H1 (cell line): ENCODE measurements at regions of chr14 and their contacts with region 1.

Region 1: DNA sequence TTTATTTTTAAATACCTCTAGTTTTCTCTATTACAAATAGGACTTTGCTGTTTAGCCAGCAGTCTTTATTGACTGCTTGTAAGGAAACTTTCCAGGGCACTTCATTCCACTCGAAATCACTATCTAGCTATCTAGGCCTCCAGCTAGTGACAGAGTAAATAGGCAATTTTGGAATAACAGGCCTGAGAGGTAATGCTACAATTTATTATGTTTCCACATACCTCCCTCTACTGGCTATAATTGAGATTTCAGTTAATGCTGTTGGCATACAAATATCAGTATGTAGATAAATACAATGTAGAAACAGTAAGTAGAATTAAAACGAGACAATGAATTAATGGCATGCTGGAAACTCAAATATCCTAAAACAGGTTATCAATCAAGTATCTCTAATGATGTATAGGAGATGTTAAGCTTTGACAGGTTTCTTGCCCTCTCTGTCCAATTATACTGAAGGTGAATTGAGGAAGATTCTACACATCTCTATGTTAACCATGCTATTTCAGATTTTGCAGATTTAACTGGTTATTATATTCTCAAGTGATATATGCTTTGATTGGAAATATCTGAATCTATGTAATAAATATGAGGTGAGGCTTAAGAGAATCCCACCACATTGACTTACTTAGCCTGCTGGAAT is 7.2 kb downstream of the DTD2 start:
- DNase-seq: no peak
- H3K4me3 ChIP-seq: no peak overlapping the region
- H3K27ac ChIP-seq: no peak overlapping the region
- H3K4me1 ChIP-seq: no peaks in the 10 kb centered on the region
- H3K27me3 ChIP-seq: peaks cover 0 to 1% (median 0%) of the 10 kb centered on the region in 4 experiments; a peak in 1 of 7 replicates
- CTCF ChIP-seq: peak in 1 of 3 experiments; percentile 39; a peak in 2 of 4 replicates
- EP300 ChIP-seq: no peak
- POLR2A ChIP-seq: no peak
- RAD21 ChIP-seq: peak; percentile 43 to 48

Region 2: DNA sequence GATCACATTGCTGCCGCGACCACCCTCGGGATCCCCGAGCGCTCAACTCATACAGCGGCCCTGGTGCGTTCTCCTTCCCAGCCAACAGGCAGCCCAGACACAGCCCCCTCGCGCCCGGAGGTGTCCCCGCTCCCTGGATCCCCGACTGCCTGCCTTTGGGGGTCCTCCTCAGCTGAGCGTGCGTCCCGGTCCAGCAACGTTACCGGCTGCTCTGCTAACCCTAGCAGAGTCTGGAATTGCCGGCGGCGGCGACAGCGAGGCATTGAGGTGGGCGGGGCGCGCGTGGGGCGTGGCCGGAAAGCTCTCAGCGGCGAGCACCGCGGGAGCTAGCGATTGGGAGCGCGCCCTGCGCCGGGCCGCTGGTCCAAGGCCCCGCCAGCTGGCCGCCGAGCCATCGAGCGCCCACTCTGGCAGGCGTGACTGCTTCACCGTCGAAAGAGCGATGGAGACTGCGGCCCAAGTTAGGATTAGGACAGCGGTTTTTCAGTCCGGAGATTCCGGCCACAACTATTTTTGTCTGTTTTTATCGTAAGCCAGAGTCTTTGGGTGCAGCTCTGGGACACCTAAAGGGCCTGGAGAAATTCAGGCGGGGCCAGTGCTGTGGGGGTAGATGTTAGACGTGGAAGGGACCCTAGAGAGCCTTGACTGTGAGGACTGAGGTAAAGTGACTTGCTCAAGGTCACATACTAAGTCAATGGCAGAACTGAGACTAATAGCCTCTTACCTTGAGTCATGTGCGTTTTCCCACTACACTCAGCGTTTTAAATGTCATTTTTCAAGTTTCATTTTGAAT is 29.6 kb before region 1 on chr14 and contains the start of gene HEATR5A:
- CTCF ChIA-PET with region 1: interaction called, 14 read pairs
- POLR2A ChIA-PET with region 1: no interaction called
- DNase-seq: peak; percentile 79 to 96
- H3K4me3 ChIP-seq: peak within 1 kb of the TSS; percentile 87 to 93 (median 88)
- H3K27ac ChIP-seq: peak within 1 kb of the TSS; percentile 20; the same call in 1 of the 2 replicates
- H3K4me1 ChIP-seq: no peaks in the 10 kb centered on the region
- H3K27me3 ChIP-seq: no peaks in the 10 kb centered on the region
- CTCF ChIP-seq: peak in 1 of 3 experiments; percentile 16; a peak in 1 of 4 replicates
- EP300 ChIP-seq: no peak
- POLR2A ChIP-seq: peak; percentile 95 to 98
- RAD21 ChIP-seq: no peak
- total RNA-seq, gene HEATR5A: 36.2 and 37.8 TPM in 2 replicates